ENCODE measurements at regions of chr20 and their contacts with region 1.

Region 1: GRCh38 chr20:59782986-59783640 is 150.3 kb downstream of the SYCP2 start:
- DNase-seq: peak; percentile 24
- H3K4me3 ChIP-seq: no peak overlapping the region
- H3K27ac ChIP-seq: no peak overlapping the region
- H3K4me1 ChIP-seq: no peaks in the 10 kb centered on the region
- H3K27me3 ChIP-seq: no peaks in the 10 kb centered on the region
- CTCF ChIP-seq: peak; percentile 95 to 99

Region 2: DNA sequence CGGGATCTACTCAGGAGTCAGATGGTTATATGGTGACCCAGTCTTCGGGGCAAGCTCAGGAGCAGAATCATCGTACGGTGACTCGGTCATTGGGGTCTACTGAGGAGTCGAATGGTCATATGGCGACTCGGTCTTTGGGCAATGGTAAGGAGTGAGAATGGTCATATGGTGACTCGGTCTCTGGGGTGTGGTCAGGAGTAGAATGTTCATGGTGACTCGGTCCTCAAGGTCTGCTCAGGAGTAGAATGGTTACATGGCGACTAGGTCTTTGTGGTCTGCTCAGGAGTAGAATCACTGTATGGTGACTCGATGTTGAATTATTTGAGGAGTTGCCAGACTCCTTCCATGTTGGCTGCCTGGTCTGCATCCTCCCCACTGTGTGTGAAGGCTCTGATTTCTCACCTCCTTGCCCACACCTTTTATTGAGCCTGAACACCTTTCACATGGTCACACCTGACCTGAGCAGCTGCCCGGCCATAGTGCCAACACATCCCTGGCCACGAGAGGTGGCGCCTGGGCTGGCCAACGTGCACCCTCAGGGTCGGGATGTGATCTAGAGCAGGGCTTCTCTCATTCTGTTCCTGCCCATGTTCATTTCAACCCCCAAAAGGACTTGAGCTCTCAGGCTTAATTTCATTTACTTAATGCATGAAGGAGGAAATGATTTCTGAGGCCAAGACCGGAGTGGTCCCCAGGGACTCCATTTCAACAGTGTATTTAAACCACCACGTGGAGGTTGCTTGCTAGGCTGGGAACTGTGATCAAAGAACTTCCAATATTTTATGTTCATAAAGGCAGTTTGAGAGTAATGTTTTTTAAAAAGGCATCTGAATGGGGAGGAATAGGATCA is 59.3 kb before region 1 on chr20:
- CTCF ChIA-PET with region 1: no interaction called
- dilution Hi-C with region 1: no loop called
- in situ Hi-C with region 1: no loop called
- intact Hi-C with region 1: no loop called
- DNase-seq: peak; percentile 46
- H3K4me3 ChIP-seq: no peak overlapping the region
- H3K27ac ChIP-seq: no peak overlapping the region
- H3K4me1 ChIP-seq: no peaks in the 10 kb centered on the region
- H3K27me3 ChIP-seq: no peaks in the 10 kb centered on the region
- CTCF ChIP-seq: no peak

Region 3: GRCh38 chr20:59850018-59850641 is 67.0 kb after region 1 on chr20:
- CTCF ChIA-PET with region 1: interaction called, 15 read pairs
- dilution Hi-C with region 1: no loop called
- in situ Hi-C with region 1: loop called (anchors 5 to 10 kb)
- intact Hi-C with region 1: loop called (anchors 1 kb)
- DNase-seq: no peak
- H3K4me3 ChIP-seq: no peak overlapping the region
- H3K27ac ChIP-seq: no peak overlapping the region
- H3K4me1 ChIP-seq: no peaks in the 10 kb centered on the region
- H3K27me3 ChIP-seq: no peaks in the 10 kb centered on the region
- CTCF ChIP-seq: peak; percentile 66 to 70

Region 4: DNA sequence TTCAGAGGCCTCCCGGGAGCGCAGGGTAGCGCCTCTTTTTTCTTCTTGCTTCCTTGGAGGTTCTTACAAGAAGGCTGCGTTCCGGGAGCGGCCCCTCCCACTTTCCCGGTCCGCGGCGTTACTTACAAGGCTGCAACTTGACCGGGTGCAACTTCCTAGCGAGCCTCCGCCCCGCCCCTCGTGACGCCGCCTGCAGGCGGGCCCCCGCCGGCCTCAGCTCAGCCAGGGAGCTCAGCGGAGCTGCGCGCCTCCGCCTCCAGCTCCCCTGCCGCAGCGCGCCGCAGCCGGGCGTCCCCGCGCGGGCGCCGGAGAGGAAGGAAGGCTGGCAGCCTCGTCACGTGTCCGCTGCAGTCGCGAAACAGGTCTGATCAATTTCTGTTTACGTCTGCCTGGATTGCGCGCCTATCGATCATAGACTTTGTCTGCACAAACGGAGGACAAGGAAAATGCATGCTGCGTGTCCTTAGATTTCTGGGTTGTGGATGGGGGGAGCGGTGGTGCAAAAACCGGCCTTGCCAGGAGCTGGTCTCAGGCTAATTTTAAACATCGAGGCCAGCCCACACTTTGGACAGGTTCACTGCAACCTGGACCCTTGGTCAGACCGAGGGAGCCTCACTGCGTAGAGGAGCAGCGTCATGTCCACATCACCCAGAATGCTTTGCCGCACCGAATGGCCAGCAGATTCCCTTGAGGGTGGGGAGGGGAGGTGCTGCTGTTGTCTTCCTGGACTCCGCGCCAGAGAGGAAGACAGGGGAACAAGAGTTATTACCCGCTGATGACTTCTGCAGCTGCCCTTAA is 157.3 kb after region 1 on chr20 and contains the starts of genes FAM217B and PPP1R3D:
- CTCF ChIA-PET with region 1: interaction called, 11 read pairs
- dilution Hi-C with region 1: no loop called
- in situ Hi-C with region 1: no loop called
- intact Hi-C with region 1: loop called (anchors 1 kb)
- DNase-seq: peak; percentile 96
- H3K4me3 ChIP-seq: peak within 1 kb of the TSS; percentile 57 to 78 (median 62)
- H3K27ac ChIP-seq: peak within 1 kb of the TSS; percentile 66
- H3K4me1 ChIP-seq: peaks cover 30% of the 10 kb centered on the region
- H3K27me3 ChIP-seq: no peaks in the 10 kb centered on the region
- CTCF ChIP-seq: no peak
- total RNA-seq, gene FAM217B: 6.8 to 13.7 TPM
- total RNA-seq, gene PPP1R3D: 6.4 to 6.8 TPM

Measured in mammary epithelial cell (primary cell).